Natural killer cell (primary cell): ENCODE measurements at regions of chr13 and their contacts with region 1.

Region 1: GRCh38 chr13:111153279-111153976 is 38.3 kb downstream of the ARHGEF7 start:
- DNase-seq: peak; percentile 93
- ATAC-seq: peak; percentile 82 to 93 (median 88)
- H3K4me3 ChIP-seq: peak overlapping the region; percentile 43
- H3K4me3 Mint-ChIP-seq: peak overlapping the region; percentile 93
- H3K27ac ChIP-seq: peak overlapping the region; percentile 71
- H3K27ac Mint-ChIP-seq: peak overlapping the region; percentile 90 to 92
- H3K4me1 ChIP-seq: peaks cover 15% of the 10 kb centered on the region
- H3K4me1 Mint-ChIP-seq: peaks cover 21 to 25% of the 10 kb centered on the region in 2 donors
- H3K27me3 ChIP-seq: no peaks in the 10 kb centered on the region
- H3K27me3 Mint-ChIP-seq: peaks cover 3 to 4% of the 10 kb centered on the region in 2 donors
- CTCF ChIP-seq: no peak

Region 2: DNA sequence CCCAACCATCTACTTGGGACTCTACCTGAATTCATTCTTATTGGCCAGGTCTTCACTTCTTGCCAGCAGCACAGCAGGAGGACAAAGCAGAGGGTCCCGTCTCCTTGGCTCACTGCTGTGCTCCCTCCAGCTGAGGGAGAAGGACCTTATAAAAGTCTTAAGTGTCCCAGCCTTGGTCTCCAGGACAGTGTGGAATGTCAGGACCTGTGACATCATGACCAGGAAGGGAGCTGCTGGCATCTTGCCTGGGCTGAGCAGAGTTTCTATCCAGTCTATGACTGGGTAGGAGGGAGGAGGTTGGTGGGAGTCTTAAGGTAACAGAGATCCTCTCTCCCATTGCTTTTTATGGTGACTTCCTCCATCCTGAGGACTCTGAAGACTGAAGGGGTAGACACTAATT is 181.9 kb before region 1 on chr13:
- intact Hi-C with region 1: no loop called
- DNase-seq: no peak
- ATAC-seq: no peak
- H3K4me3 ChIP-seq: no peak overlapping the region
- H3K4me3 Mint-ChIP-seq: no peak overlapping the region
- H3K27ac ChIP-seq: no peak overlapping the region
- H3K27ac Mint-ChIP-seq: no peak overlapping the region
- H3K4me1 ChIP-seq: no peaks in the 10 kb centered on the region
- H3K4me1 Mint-ChIP-seq: no peaks in the 10 kb centered on the region
- H3K27me3 ChIP-seq: no peaks in the 10 kb centered on the region
- H3K27me3 Mint-ChIP-seq: peaks cover 21 to 78% of the 10 kb centered on the region in 2 donors
- CTCF ChIP-seq: no peak

Region 3: DNA sequence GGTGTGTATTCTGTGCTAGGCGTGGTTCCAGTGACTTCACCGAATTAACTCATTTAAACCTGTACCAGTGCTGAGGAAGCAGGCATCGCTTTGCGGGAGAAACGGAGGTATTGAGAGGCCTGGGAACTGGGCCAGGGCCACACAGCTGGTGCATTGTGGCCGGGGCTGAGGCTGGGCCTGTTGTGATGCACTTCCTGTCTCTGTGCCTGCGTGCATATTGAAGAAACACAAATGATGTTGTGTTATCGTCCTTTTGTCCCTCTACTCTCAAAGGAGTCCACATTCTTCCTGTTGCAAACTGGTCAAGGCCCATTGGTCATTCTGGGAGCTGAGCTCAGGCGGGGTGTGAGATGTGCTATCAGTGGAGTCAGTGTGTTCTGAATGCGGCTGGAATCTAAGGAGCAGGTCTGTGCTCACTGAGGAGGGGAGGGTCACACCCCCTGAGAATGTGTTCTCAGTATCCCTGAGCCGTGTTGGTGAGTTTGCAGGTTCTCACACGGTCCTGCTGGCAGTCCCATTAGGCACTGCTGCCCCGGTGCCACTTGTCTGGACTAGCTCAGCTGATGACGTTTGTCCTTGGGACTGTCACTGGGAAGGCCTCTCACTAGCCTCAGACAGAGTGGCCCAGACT is 23.8 kb after region 1 on chr13:
- intact Hi-C with region 1: loop called (anchors 1 kb)
- DNase-seq: peak; percentile 48 to 83
- ATAC-seq: peak; percentile 84 to 92 (median 92)
- H3K4me3 ChIP-seq: no peak overlapping the region
- H3K4me3 Mint-ChIP-seq: peak overlapping the region; percentile 77
- H3K27ac ChIP-seq: peak overlapping the region; percentile 80
- H3K27ac Mint-ChIP-seq: peak overlapping the region; percentile 90 to 94
- H3K4me1 ChIP-seq: peaks cover 35% of the 10 kb centered on the region
- H3K4me1 Mint-ChIP-seq: peaks cover 78 to 83% of the 10 kb centered on the region in 2 donors
- H3K27me3 ChIP-seq: no peaks in the 10 kb centered on the region
- H3K27me3 Mint-ChIP-seq: no peaks in the 10 kb centered on the region
- CTCF ChIP-seq: no peak